Activated CD4-positive, alpha-beta T cell treated with anti-CD3 and anti-CD28 coated beads for 36 hours (primary cell): ENCODE measurements at regions of chr22 and their contacts with region 1.

Region 1: GRCh38 chr22:45413368-45414211 is at the starts of genes RIBC2 and SMC1B:
- DNase-seq: peak; percentile 93
- ATAC-seq: peak; percentile 96
- H3K4me3 Mint-ChIP-seq: peak within 1 kb of the TSS; percentile 78
- H3K27ac Mint-ChIP-seq: peak within 1 kb of the TSS; percentile 75
- H3K4me1 Mint-ChIP-seq: peaks cover 10% of the 10 kb centered on the region
- H3K27me3 Mint-ChIP-seq: peaks cover 8% of the 10 kb centered on the region
- total RNA-seq, gene RIBC2: 6.3 to 7.8 TPM
- total RNA-seq, gene SMC1B: 0.62 to 0.67 TPM

Region 2: DNA sequence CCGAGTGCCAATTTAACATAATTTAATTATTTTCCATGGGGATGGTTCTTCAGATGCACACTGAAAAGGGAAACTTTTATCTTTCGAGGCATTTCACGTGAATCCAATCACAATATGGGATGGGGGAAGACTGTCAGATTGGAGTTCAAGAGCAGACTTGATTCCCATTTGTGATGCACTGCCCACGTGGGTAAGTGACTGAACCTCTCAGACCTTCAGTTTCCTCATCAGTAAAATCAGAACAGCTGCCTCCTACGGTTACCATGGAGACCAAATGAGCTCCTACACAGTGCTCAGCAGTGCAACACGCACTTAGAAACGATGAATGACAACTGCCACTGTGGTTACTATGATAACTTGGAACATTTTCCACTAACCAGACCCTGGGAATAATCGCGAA is 194.6 kb before region 1 on chr22:
- CTCF ChIA-PET with region 1: no interaction called
- POLR2A ChIA-PET with region 1: no interaction called
- intact Hi-C with region 1: loop called in 1 of 2 experiments (anchors 1 kb)
- DNase-seq: peak; percentile 74
- ATAC-seq: peak; percentile 100
- H3K4me3 Mint-ChIP-seq: no peak overlapping the region
- H3K27ac Mint-ChIP-seq: peak overlapping the region; percentile 30
- H3K4me1 Mint-ChIP-seq: peaks cover 22% of the 10 kb centered on the region
- H3K27me3 Mint-ChIP-seq: no peaks in the 10 kb centered on the region

Region 3: DNA sequence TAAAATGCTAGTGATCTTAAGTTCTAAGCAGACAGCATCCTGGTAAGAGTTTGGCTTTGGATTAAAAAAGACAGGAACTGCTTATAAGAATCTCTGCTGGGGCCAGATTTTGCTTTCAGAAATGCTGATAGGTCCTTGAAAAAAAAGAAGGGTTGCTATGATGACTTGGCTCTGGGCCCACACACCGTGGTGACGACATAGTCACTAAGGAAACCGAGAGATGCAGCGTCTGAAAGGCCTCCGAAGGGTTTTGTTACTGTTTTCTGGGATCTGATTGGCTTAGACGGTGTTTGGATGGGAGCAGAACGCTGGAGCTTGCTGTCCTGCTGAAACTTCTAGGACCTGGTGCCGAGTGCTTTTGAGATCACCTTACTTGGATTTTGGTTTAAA is 95.4 kb before region 1 on chr22:
- CTCF ChIA-PET with region 1: no interaction called
- POLR2A ChIA-PET with region 1: interaction called, 4 read pairs
- intact Hi-C with region 1: loop called in 1 of 2 experiments (anchors 1 kb)
- DNase-seq: peak; percentile 95
- ATAC-seq: peak; percentile 79
- H3K4me3 Mint-ChIP-seq: peak overlapping the region; percentile 72
- H3K27ac Mint-ChIP-seq: peak overlapping the region; percentile 95
- H3K4me1 Mint-ChIP-seq: peaks cover 89% of the 10 kb centered on the region
- H3K27me3 Mint-ChIP-seq: no peaks in the 10 kb centered on the region

Region 4: GRCh38 chr22:45424231-45424731 is 10.7 kb after region 1 on chr22:
- CTCF ChIA-PET with region 1: no interaction called
- POLR2A ChIA-PET with region 1: no interaction called
- intact Hi-C with region 1: no loop called
- DNase-seq: no peak
- ATAC-seq: no peak
- H3K4me3 Mint-ChIP-seq: no peak overlapping the region
- H3K27ac Mint-ChIP-seq: no peak overlapping the region
- H3K4me1 Mint-ChIP-seq: no peaks in the 10 kb centered on the region
- H3K27me3 Mint-ChIP-seq: no peaks in the 10 kb centered on the region

Region 5: DNA sequence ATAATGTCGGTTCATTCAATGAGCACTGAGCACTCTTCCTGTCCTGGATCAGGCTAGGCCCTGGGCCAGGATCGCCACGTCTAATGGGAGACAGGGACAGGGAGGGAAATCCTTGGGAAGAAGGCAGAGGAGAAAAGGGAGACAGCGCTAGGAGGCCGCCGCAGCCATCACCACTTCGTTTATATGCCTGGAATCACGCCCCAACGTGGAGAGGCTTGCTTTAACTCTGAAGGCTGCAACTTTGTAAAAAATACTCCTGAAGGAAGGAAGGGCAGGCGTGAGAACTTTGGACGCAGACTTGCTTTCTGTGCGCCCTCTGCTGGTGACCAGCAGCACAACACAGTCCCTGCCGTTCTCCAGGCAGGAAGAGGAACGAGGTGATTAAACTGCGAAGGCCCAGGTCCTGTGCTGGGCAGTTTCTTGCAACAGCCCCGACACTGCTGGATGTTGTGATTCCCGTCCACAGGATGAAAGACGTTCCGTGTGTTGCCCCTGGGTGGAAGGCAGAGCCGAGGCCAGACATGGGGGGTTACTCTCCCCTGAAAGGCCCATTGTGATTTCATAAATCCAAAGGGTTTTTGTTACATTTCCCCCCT is 22.1 kb after region 1 on chr22:
- CTCF ChIA-PET with region 1: interaction called, 4 read pairs
- POLR2A ChIA-PET with region 1: no interaction called
- intact Hi-C with region 1: loop called in 1 of 2 experiments (anchors 1 kb)
- DNase-seq: peak; percentile 88
- ATAC-seq: peak; percentile 91
- H3K4me3 Mint-ChIP-seq: no peak overlapping the region
- H3K27ac Mint-ChIP-seq: no peak overlapping the region
- H3K4me1 Mint-ChIP-seq: peaks cover 11% of the 10 kb centered on the region
- H3K27me3 Mint-ChIP-seq: no peaks in the 10 kb centered on the region